ENCODE measurements at regions of chr12 and their contacts with region 1.

Region 1: GRCh38 chr12:110280779-110281548 is at the start of gene ATP2A2:
- DNase-seq: peak; percentile 87
- H3K4me3 ChIP-seq: peak within 1 kb of the TSS; percentile 91 to 94 (median 91)
- H3K27ac ChIP-seq: peak within 1 kb of the TSS; percentile 84
- H3K4me1 ChIP-seq: peaks cover 33% of the 10 kb centered on the region
- H3K27me3 ChIP-seq: no peaks in the 10 kb centered on the region
- CTCF ChIP-seq: no peak
- total RNA-seq, gene ATP2A2: 311 to 337 TPM

Region 2: GRCh38 chr12:110056147-110056484 is 224.8 kb before region 1 on chr12:
- CTCF ChIA-PET with region 1: no interaction called
- dilution Hi-C with region 1: loop called (anchors 10 kb)
- in situ Hi-C with region 1: no loop called
- intact Hi-C with region 1: no loop called
- DNase-seq: no peak
- H3K4me3 ChIP-seq: no peak overlapping the region
- H3K27ac ChIP-seq: peak overlapping the region; percentile 5
- H3K4me1 ChIP-seq: peaks cover 10% of the 10 kb centered on the region
- H3K27me3 ChIP-seq: no peaks in the 10 kb centered on the region
- CTCF ChIP-seq: no peak

Region 3: GRCh38 chr12:110124184-110124995 is 156.6 kb before region 1 on chr12 and contains the start of gene IFT81:
- CTCF ChIA-PET with region 1: no interaction called
- dilution Hi-C with region 1: loop called (anchors 5 kb)
- in situ Hi-C with region 1: no loop called
- intact Hi-C with region 1: loop called (anchors 5 kb)
- DNase-seq: peak; percentile 91
- H3K4me3 ChIP-seq: peak within 1 kb of the TSS; percentile 82 to 98 (median 89)
- H3K27ac ChIP-seq: peak within 1 kb of the TSS; percentile 99
- H3K4me1 ChIP-seq: no peaks in the 10 kb centered on the region
- H3K27me3 ChIP-seq: no peaks in the 10 kb centered on the region
- CTCF ChIP-seq: peak in 1 of 2 donors; percentile 11
- total RNA-seq, gene IFT81: 8.8 to 11.8 TPM

Region 4: GRCh38 chr12:110245369-110245772 is 35.6 kb before region 1 on chr12:
- CTCF ChIA-PET with region 1: interaction called, 4 read pairs
- dilution Hi-C with region 1: no loop called
- in situ Hi-C with region 1: no loop called
- intact Hi-C with region 1: loop called (anchors 1 kb)
- DNase-seq: no peak
- H3K4me3 ChIP-seq: no peak overlapping the region
- H3K27ac ChIP-seq: no peak overlapping the region
- H3K4me1 ChIP-seq: peaks cover 39% of the 10 kb centered on the region
- H3K27me3 ChIP-seq: no peaks in the 10 kb centered on the region
- CTCF ChIP-seq: peak; percentile 41 to 51

Region 5: GRCh38 chr12:110379631-110380030 is 98.7 kb after region 1 on chr12:
- CTCF ChIA-PET with region 1: no interaction called
- dilution Hi-C with region 1: loop called (anchors 10 kb)
- in situ Hi-C with region 1: no loop called
- intact Hi-C with region 1: no loop called
- DNase-seq: no peak
- H3K4me3 ChIP-seq: no peak overlapping the region
- H3K27ac ChIP-seq: no peak overlapping the region
- H3K4me1 ChIP-seq: no peaks in the 10 kb centered on the region
- H3K27me3 ChIP-seq: no peaks in the 10 kb centered on the region
- CTCF ChIP-seq: no peak